Gastrocnemius medialis (tissue), 4 donors: ENCODE measurements at regions of chrX and their contacts with region 1.

Region 1: DNA sequence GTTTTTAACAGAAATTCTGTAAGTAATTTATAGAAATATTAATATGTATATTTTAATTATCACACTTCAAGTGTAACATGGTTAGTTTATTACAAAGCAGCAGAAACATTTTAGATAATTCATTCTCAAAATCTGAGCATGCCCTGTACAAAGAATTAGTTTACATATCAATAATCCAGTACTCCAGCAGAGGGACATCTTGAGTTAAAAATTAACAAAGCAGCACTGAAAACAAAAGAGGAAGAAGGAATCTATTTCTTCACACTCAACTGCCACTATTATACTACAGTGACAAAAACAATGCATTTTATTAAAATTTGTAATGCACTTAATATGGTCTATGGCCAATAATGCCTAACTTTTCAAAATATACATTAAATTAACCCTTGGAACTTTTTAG is 179.1 kb upstream of the KLHL4 start:
- DNase-seq: no peak
- ATAC-seq: no peak
- H3K4me3 ChIP-seq: no peak overlapping the region
- H3K27ac ChIP-seq: no peak overlapping the region
- H3K4me1 ChIP-seq: no peaks in the 10 kb centered on the region
- H3K27me3 ChIP-seq: no peaks in the 10 kb centered on the region
- CTCF ChIP-seq: no peak
- POLR2A ChIP-seq: no peak

Region 2: DNA sequence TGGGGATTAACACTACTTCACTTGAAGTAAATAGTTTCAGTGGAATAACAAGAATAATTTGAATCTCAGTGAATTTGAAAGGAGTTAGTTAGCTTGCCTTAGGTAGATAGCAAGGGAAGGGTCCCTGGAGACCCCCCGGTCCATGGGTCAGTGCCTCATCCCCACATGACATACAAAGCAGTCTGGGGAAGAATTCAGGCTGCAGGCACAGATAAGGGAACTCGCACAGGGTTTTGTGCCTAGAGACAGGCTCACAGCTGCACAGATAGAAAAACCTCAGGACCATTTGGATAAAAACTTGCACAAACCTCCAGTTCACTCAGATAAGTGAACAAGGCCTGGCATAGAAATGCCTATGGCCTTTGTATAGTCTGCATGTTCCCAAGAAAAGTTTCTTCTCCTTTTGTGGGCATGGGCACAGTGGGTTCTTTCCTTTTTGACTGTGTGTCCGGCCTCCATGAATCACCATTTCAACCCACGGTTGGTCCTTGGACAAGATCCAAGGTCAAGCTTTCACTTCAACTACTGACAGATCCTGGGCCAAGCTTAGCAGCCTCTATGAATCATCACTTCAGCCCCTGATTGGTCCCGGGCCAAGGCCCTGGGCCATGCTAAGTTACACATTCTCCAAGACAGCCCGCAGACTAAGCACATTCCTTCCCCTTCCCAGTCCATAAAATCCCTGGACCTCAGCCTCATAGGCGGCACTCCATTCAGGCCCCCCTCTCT is 70.8 kb after region 1 on chrX:
- in situ Hi-C with region 1: no loop called
- intact Hi-C with region 1: no loop called
- DNase-seq: no peak
- ATAC-seq: no peak
- H3K4me3 ChIP-seq: no peak overlapping the region
- H3K27ac ChIP-seq: no peak overlapping the region
- H3K4me1 ChIP-seq: no peaks in the 10 kb centered on the region
- H3K27me3 ChIP-seq: no peaks in the 10 kb centered on the region
- CTCF ChIP-seq: no peak
- POLR2A ChIP-seq: no peak

Region 3: GRCh38 chrX:87664381-87664780 is 325.9 kb after region 1 on chrX:
- in situ Hi-C with region 1: loop called in 1 of 4 experiments (anchors 25 kb)
- intact Hi-C with region 1: loop called (anchors 10 kb)
- DNase-seq: no peak
- ATAC-seq: no peak
- H3K4me3 ChIP-seq: no peak overlapping the region
- H3K27ac ChIP-seq: no peak overlapping the region
- H3K4me1 ChIP-seq: no peaks in the 10 kb centered on the region
- H3K27me3 ChIP-seq: no peaks in the 10 kb centered on the region
- CTCF ChIP-seq: peak in 2 of 5 experiments; percentile 10 to 39
- POLR2A ChIP-seq: no peak